HepG2 (cell line): ENCODE measurements at regions of chr9 and their contacts with region 1.

Region 1: DNA sequence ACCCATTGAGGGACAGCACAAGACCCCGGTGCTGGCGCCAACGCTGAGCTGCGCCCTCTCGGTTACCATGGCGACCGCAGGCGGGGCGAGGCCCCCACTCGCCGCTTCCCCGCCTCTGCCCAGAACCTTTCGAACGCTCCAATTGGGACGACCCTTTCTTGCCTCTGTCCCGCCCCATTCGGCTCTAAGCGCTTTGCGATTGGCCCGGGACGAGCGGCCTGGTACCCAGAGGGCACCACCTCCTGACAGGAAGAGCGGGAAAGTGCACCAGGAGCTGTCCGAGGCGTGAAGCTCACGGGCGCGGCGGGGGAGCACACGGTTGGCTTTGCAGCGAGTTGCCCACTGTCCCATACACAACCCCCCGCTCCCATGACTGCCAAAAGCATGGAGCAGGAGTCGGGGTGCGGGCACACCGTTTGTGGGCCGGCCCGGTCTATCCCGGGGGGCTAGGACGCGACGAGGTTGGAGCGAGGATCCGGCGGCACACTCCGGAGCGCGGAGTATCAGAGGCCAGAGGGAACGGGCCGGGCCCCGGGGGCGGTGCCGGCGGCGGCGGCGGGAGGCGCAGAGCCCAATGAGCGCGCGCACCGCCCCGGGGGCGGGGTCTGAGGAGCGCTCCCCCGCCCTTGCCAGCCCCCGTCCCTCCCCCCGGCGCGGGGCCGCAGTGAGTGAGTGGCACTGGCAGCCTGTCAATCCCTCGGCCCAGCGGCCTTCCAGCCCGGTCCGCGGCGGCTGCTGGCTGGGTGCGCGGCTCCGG is 978 bp upstream of the PBX3 start:
- DNase-seq: peak; percentile 89
- ATAC-seq: peak; percentile 92
- H3K4me3 ChIP-seq: peak overlapping the region; percentile 55 to 85 (median 82)
- H3K27ac ChIP-seq: peak overlapping the region; percentile 55
- H3K4me1 ChIP-seq: peaks cover 43% of the 10 kb centered on the region
- H3K27me3 ChIP-seq: 0 out of 5 replicates have a peak, but pooled peaks cover 0 to 3% of the 10 kb centered on the region in 2 experiments
- CTCF ChIP-seq: no peak
- EP300 ChIP-seq: no peak
- POLR2A ChIP-seq: peak in 1 of 2 experiments; percentile 57; a peak in 2 of 4 replicates
- RAD21 ChIP-seq: 0 out of 2 replicates have a peak, but pooled peaks have one; percentile 8

Region 2: DNA sequence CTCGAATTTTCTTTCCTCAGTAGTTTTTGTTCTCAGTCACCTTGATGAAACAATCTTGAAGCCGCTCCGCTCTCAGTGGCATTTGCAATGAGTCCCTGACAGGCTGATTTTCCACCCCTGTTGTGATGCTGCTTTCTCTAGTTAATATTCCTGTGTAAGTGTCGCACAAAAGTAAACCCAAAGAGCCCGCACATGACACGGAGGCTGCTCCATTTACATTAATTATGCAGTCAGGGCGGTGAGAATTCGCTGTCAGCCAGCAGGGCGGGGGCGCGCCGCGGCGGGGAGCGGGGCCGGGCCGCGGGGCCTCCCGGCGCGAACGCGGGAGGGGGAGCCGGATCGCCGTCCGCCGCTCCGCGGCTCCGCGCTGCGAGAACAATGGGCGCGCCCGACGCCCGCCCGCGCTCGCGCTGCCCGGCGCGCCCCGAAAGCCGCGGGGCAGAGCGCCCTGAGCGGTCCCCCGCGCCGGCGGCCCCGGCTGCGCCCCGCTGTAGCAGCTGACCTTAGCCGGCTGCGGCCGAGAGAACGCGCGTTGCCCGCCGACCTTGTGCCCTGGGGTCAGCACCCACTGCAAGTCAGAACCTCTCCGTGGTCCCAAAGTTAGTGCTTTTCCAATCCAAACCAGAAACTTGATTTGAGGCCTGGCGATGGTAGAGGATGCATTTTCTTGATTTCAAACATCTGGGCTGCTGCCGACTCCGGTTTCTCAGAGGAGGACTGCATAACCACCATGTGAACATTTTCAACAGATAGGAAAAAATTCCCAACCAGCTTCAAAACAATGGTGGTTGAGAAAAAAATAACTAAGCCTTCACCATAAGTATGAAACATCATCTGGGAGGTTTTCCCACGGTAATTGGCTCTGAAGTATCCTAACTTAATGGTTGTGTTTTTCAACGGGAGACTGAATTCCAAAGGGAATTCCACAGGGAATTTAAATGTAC is 143.6 kb after region 1 on chr9:
- CTCF ChIA-PET with region 1: no interaction called
- POLR2A ChIA-PET with region 1: no interaction called
- in situ Hi-C with region 1: no loop called
- intact Hi-C with region 1: loop called (anchors 5 kb)
- DNase-seq: no peak
- ATAC-seq: peak; percentile 86
- H3K4me3 ChIP-seq: peak overlapping the region; percentile 66 to 85 (median 77)
- H3K27ac ChIP-seq: no peak overlapping the region
- H3K4me1 ChIP-seq: peaks cover 45% of the 10 kb centered on the region
- H3K27me3 ChIP-seq: no peaks in the 10 kb centered on the region
- CTCF ChIP-seq: no peak
- EP300 ChIP-seq: no peak
- POLR2A ChIP-seq: no peak
- RAD21 ChIP-seq: no peak